Activated B cell treated with CpG ODN at 0.5 μM for 24 hours (primary cell): ENCODE measurements at regions of chr4 and their contacts with region 1.

Region 1: GRCh38 chr4:118835571-118836300 is at the start of gene SEC24D:
- DNase-seq: peak; percentile 90
- ATAC-seq: peak; percentile 88
- H3K4me3 Mint-ChIP-seq: peak within 1 kb of the TSS; percentile 100
- H3K27ac Mint-ChIP-seq: peak within 1 kb of the TSS; percentile 96
- H3K4me1 Mint-ChIP-seq: peaks cover 17% of the 10 kb centered on the region
- H3K27me3 Mint-ChIP-seq: no peaks in the 10 kb centered on the region
- CTCF ChIP-seq: no peak
- total RNA-seq, gene SEC24D: 19.4 and 22.6 TPM in 2 replicates

Region 2: GRCh38 chr4:118810991-118811764 is 24.6 kb before region 1 on chr4:
- CTCF ChIA-PET with region 1: no interaction called
- POLR2A ChIA-PET with region 1: no interaction called
- intact Hi-C with region 1: no loop called
- DNase-seq: no peak
- ATAC-seq: no peak
- H3K4me3 Mint-ChIP-seq: no peak overlapping the region
- H3K27ac Mint-ChIP-seq: no peak overlapping the region
- H3K4me1 Mint-ChIP-seq: no peaks in the 10 kb centered on the region
- H3K27me3 Mint-ChIP-seq: no peaks in the 10 kb centered on the region
- CTCF ChIP-seq: no peak

Region 3: GRCh38 chr4:118850488-118851173 is 14.9 kb after region 1 on chr4:
- CTCF ChIA-PET with region 1: interaction called, 3 read pairs
- POLR2A ChIA-PET with region 1: interaction called, 6 read pairs
- intact Hi-C with region 1: loop called (anchors 1 kb)
- DNase-seq: no peak
- ATAC-seq: peak; percentile 88
- H3K4me3 Mint-ChIP-seq: peak overlapping the region; percentile 88
- H3K27ac Mint-ChIP-seq: peak overlapping the region; percentile 82
- H3K4me1 Mint-ChIP-seq: peaks cover 19% of the 10 kb centered on the region
- H3K27me3 Mint-ChIP-seq: peaks cover 6% of the 10 kb centered on the region
- CTCF ChIP-seq: no peak

Region 4: DNA sequence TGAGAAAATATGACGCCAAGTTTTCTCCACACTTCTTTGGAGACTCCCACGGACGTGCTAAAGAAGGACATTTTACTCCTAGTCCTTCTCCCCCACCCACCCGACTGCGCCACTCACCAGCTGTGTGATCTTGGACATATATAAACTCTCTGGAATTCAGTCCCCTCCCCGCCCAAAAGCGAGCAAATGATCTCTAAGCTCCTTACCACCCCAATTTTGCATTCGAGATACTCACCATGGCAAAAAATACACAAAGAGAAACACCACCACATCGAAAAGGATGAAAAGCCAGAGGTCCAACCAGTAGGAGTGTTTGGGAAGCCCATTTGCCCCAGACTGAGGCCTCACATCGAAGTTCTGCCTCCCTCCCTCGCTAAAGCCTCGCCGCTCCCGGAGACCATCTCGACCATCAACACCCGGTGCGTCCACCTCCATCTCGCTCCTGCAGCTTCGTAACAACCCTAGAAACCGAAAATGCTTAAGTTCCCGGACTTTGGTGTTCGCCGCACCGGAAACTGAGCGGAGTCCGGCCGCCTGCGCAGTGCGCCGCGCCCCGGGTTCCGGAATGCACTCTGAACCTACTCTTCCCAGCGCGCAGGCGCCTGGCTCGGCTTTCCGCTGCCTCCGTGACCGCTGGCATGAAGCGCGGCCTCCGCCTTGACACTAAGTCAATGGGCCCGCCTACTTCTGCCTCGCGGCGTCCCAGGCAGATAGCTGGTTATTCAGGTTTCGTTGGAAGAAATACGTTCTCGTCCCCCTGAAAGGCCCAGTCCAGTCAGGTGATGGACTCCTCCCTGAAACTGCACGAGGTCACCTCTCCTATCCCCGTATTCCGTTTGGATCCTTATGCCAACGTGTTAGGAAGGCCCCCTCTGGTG is 464.6 kb after region 1 on chr4:
- CTCF ChIA-PET with region 1: no interaction called
- POLR2A ChIA-PET with region 1: no interaction called
- intact Hi-C with region 1: loop called (anchors 1 kb)
- DNase-seq: peak; percentile 88
- ATAC-seq: peak; percentile 95
- H3K4me3 Mint-ChIP-seq: peak overlapping the region; percentile 99
- H3K27ac Mint-ChIP-seq: peak overlapping the region; percentile 97
- H3K4me1 Mint-ChIP-seq: peaks cover 37% of the 10 kb centered on the region
- H3K27me3 Mint-ChIP-seq: no peaks in the 10 kb centered on the region
- CTCF ChIP-seq: no peak